Sigmoid colon (tissue), 7 donors: ENCODE measurements at regions of chr3 and their contacts with region 1.

Region 1: GRCh38 chr3:123745184-123745855 is 138.8 kb downstream of the MYLK start:
- DNase-seq: no peak
- H3K4me3 ChIP-seq: no peak overlapping the region
- H3K27ac ChIP-seq: no peak overlapping the region
- H3K4me1 ChIP-seq: peaks cover 0 to 40% (median 24%) of the 10 kb centered on the region in 4 donors
- H3K27me3 ChIP-seq: no peaks in the 10 kb centered on the region
- CTCF ChIP-seq: no peak
- EP300 ChIP-seq: no peak
- POLR2A ChIP-seq: no peak

Region 2: DNA sequence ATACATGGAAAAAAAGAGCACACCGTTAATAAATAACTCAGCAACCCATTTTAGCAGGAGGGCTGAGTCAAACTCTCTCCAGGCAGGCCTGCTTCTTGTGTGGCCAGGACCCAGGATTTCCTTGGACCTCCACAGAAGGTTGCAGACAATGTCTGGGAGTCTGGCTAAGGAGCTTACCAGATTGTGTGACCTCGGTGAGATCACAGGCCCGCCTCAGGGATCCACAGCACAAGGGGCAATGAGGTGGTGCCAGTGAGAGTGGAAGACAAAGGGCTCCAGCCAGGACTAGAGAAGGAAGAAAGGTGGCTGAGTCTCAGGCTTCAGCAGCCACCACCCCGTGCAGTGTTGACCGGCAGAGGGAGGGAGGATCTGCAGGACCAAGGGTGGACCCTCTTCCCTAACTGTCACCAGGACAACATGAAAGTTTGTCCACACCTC is 575.8 kb before region 1 on chr3:
- intact Hi-C with region 1: no loop called
- DNase-seq: no peak
- H3K4me3 ChIP-seq: no peak overlapping the region
- H3K27ac ChIP-seq: peak overlapping the region in 3 of 4 donors; percentile 44 to 49 (median 47)
- H3K4me1 ChIP-seq: peaks cover 0 to 11% (median 8%) of the 10 kb centered on the region in 4 donors
- H3K27me3 ChIP-seq: no peaks in the 10 kb centered on the region
- CTCF ChIP-seq: no peak
- EP300 ChIP-seq: no peak
- POLR2A ChIP-seq: no peak

Region 3: GRCh38 chr3:123986427-123986826 is 241.1 kb after region 1 on chr3:
- intact Hi-C with region 1: loop called (anchors 10 kb)
- DNase-seq: no peak
- H3K4me3 ChIP-seq: no peak overlapping the region
- H3K27ac ChIP-seq: no peak overlapping the region
- H3K4me1 ChIP-seq: no peaks in the 10 kb centered on the region
- H3K27me3 ChIP-seq: no peaks in the 10 kb centered on the region
- CTCF ChIP-seq: no peak
- EP300 ChIP-seq: no peak
- POLR2A ChIP-seq: no peak